ENCODE measurements at regions of chr1 and their contacts with region 1.

Region 1: DNA sequence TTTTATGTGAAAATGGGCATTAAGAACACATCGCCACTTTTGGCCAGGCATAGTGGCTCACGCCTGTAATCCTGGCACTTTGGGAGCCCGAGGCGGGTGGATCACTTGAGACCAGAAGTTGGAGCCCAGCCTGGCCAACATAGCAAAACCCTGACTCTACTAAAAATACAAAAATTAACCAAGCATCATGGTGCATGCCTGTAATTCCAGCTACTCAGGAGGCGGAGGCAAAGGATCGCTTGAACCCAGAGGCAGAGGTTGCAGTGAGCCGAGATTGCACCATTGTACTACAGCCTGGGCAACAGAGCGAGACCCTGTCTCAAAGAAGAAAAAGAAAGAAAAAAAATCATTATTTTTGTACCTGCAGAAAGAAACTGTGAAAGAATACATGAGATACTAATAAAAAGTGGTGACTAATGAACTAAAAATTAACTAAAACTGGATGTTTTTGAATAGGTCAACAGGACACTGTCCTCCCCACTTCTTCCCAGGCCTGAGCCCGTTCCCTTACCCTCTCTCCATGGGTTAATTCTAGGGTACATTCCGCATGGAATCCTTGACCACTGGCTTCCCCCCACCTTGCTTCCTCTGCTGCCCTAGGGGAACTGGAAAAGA is 8.3 kb upstream of the TINAGL1 start:
- DNase-seq: peak in 1 of 2 donors; percentile 16
- H3K4me3 ChIP-seq: no peak overlapping the region
- H3K27ac ChIP-seq: no peak overlapping the region
- H3K4me1 ChIP-seq: peaks cover 30% of the 10 kb centered on the region
- H3K27me3 ChIP-seq: no peaks in the 10 kb centered on the region
- CTCF ChIP-seq: no peak
- POLR2A ChIP-seq: no peak

Region 2: GRCh38 chr1:31593770-31594632 is 25.9 kb after region 1 on chr1:
- intact Hi-C with region 1: loop called (anchors 2 kb)
- DNase-seq: peak in 1 of 2 donors; percentile 85
- H3K4me3 ChIP-seq: no peak overlapping the region
- H3K27ac ChIP-seq: no peak overlapping the region
- H3K4me1 ChIP-seq: peaks cover 7% of the 10 kb centered on the region
- H3K27me3 ChIP-seq: no peaks in the 10 kb centered on the region
- CTCF ChIP-seq: peak; percentile 62 to 81 (median 79)
- POLR2A ChIP-seq: no peak

Region 3: DNA sequence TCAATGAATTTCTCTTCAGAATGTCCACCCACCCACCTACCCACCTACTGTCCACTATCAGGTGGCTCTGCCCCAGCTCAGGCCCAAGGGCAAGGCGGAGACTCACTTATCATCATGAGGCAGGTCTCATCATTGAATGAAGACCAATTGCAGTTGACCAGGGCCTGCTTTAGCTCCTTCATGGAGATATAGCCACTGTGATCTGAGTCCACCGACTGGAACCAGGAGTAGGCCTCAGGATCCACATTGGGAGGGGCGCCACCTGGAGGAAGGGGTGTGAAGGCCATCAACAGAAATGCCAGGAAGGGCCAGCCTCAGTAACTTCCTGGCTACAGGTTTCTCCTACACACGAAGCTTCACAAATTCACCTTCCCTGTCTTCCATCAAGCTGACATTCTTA is 65.0 kb after region 1 on chr1:
- intact Hi-C with region 1: no loop called
- DNase-seq: no peak
- H3K4me3 ChIP-seq: no peak overlapping the region
- H3K27ac ChIP-seq: no peak overlapping the region
- H3K4me1 ChIP-seq: peaks cover 13% of the 10 kb centered on the region
- H3K27me3 ChIP-seq: no peaks in the 10 kb centered on the region
- CTCF ChIP-seq: no peak
- POLR2A ChIP-seq: no peak

Region 4: GRCh38 chr1:31705080-31705866 is 137.2 kb after region 1 on chr1:
- intact Hi-C with region 1: no loop called
- DNase-seq: no peak
- H3K4me3 ChIP-seq: peak overlapping the region in 1 of 2 donors; percentile 51
- H3K27ac ChIP-seq: peak overlapping the region; percentile 87
- H3K4me1 ChIP-seq: peaks cover 63% of the 10 kb centered on the region
- H3K27me3 ChIP-seq: no peaks in the 10 kb centered on the region
- CTCF ChIP-seq: peak in 2 of 3 experiments; percentile 19 to 22
- POLR2A ChIP-seq: no peak

Measured in vagina (tissue), 2 donors.